ENCODE measurements at regions of chr17 and their contacts with region 1.

Region 1: DNA sequence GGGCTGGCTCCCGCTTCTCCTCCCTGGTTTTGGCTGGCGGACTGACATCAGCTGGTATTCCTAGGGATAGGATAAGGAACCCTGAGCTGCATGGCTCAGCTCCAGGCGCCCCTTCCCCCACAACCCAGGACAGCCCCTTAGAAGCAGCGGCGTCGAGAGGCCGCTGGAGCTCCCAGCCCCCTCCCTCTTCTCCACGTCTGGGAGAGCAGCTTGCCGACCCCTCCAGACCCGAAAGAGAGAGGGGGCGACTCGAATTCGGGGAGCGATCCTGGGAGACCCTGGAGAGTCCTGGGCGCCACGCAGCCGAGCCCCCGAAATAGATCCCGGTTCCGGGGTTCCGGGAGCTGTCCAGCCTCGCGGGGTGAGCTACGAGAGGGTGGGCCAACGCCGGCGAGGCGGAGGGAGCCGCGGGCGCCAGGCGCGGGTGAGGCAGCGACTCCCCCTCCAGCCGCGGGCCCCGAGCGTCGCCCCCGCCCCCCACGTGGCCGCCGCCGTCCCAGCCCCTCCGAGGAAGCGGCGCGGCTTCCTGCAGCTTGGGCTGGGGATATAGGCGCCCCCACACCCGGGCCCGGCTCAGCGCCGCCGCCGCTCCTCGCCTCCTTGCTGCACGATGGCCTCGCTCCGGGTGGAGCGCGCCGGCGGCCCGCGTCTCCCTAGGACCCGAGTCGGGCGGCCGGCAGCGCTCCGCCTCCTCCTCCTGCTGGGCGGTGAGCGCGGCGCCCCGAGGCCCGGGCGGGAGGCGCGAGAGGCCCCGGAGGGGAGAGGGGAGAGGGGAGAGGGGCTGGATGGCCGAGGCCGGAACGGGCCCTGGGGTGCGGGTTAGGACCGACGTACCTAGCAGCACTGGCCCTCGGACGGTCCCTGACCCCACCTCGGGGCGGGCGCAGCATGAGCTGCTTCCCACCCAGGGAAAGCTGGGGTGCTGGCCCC is at the start of gene RAMP2:
- DNase-seq: no peak
- ATAC-seq: peak; percentile 43
- H3K4me3 Mint-ChIP-seq: no peak within 1 kb of the TSS
- H3K27ac Mint-ChIP-seq: no peak within 1 kb of the TSS
- H3K4me1 Mint-ChIP-seq: peaks cover 4% of the 10 kb centered on the region
- H3K27me3 Mint-ChIP-seq: peaks cover 55% of the 10 kb centered on the region
- CTCF ChIP-seq: no peak
- total RNA-seq, gene RAMP2: not detected

Region 2: DNA sequence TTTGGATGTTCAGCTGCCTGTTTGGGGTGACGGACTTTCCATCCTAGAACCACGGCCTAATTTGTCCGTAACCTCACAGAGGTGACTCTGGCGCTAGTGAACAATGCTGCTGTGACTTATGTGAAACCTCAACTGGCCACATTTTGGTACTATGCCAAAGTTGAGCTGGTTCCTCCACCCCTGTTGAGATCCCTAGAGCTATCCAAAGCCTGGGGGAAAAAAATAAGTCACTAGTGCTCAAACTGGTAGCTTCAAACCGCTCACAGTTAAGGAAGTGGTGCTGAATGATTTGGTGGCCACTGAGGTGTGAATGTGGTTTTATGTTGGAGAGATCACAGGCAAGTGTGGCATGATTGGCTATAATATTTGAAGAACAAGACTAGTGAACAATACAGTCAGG is 113.1 kb before region 1 on chr17:
- CTCF ChIA-PET with region 1: no interaction called
- POLR2A ChIA-PET with region 1: no interaction called
- intact Hi-C with region 1: no loop called
- DNase-seq: no peak
- ATAC-seq: no peak
- H3K4me3 Mint-ChIP-seq: no peak overlapping the region
- H3K27ac Mint-ChIP-seq: no peak overlapping the region
- H3K4me1 Mint-ChIP-seq: no peaks in the 10 kb centered on the region
- H3K27me3 Mint-ChIP-seq: peaks cover 8% of the 10 kb centered on the region
- CTCF ChIP-seq: no peak

Region 3: DNA sequence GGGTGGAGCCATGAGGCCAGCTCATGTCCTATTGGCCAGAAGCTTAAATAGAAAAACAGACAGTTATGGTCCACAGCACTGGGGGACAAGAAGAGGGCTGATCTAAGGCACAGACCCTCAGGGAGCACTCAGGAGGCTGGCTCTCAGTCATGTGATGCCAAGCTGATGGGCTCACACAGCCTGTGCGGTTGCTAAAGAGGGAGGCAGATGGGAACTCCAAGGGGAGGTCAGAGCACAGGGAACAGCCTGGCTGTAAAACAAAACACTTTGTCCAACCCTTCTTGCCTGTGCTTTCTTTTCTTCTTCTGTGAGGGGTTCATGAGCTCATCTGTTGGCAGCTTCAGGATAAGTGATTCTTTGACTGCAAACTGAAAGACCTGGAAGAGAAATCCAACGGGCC is 51.4 kb before region 1 on chr17:
- CTCF ChIA-PET with region 1: interaction called, 10 read pairs
- POLR2A ChIA-PET with region 1: no interaction called
- intact Hi-C with region 1: no loop called
- DNase-seq: no peak
- ATAC-seq: no peak
- H3K4me3 Mint-ChIP-seq: no peak overlapping the region
- H3K27ac Mint-ChIP-seq: no peak overlapping the region
- H3K4me1 Mint-ChIP-seq: peaks cover 18% of the 10 kb centered on the region
- H3K27me3 Mint-ChIP-seq: no peaks in the 10 kb centered on the region
- CTCF ChIP-seq: no peak

Region 4: DNA sequence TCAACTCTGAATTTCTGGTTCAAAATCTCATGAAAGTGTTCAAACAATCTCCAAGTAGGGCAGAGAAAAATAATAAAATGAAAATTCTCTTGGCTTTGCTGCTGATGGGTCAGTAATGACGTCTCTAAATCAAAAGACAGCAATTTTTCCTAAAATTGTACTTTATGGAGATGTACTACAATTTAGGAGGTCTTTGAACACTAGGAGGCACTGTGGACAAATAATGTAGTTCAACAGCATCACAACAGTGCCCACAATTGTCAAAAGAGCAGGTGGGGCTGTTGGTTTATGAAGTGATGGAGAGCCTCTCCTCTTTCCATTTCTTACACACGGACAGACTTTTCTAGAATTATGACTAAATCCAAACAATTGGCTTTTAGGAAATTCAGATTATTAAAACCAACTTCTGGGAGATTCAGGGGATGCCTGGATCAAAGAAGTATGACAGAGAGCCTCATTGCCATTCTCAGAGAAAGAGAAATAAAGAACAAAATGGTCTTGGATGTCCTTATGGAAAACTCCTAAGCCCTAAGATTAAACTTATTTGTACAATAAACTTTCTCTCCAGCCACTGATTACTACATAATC is 39.8 kb before region 1 on chr17:
- CTCF ChIA-PET with region 1: interaction called, 54 read pairs
- POLR2A ChIA-PET with region 1: interaction called, 3 read pairs
- intact Hi-C with region 1: loop called (anchors 2 kb)
- DNase-seq: peak; percentile 43
- ATAC-seq: peak; percentile 75
- H3K4me3 Mint-ChIP-seq: no peak overlapping the region
- H3K27ac Mint-ChIP-seq: no peak overlapping the region
- H3K4me1 Mint-ChIP-seq: no peaks in the 10 kb centered on the region
- H3K27me3 Mint-ChIP-seq: no peaks in the 10 kb centered on the region
- CTCF ChIP-seq: peak; percentile 81

Region 5: GRCh38 chr17:42744806-42745617 is 15.9 kb before region 1 on chr17 and contains the start of gene EZH1:
- CTCF ChIA-PET with region 1: interaction called, 38 read pairs
- POLR2A ChIA-PET with region 1: interaction called, 3 read pairs
- intact Hi-C with region 1: no loop called
- DNase-seq: peak; percentile 91
- ATAC-seq: peak; percentile 91
- H3K4me3 Mint-ChIP-seq: peak within 1 kb of the TSS; percentile 98
- H3K27ac Mint-ChIP-seq: peak within 1 kb of the TSS; percentile 98
- H3K4me1 Mint-ChIP-seq: peaks cover 15% of the 10 kb centered on the region
- H3K27me3 Mint-ChIP-seq: peaks cover 4% of the 10 kb centered on the region
- CTCF ChIP-seq: no peak
- total RNA-seq, gene EZH1: 23.1 to 25.5 TPM

Region 6: GRCh38 chr17:42750739-42751344 is 10.1 kb before region 1 on chr17:
- CTCF ChIA-PET with region 1: interaction called, 38 read pairs
- POLR2A ChIA-PET with region 1: interaction called, 3 read pairs
- intact Hi-C with region 1: no loop called
- DNase-seq: no peak
- ATAC-seq: no peak
- H3K4me3 Mint-ChIP-seq: no peak overlapping the region
- H3K27ac Mint-ChIP-seq: no peak overlapping the region
- H3K4me1 Mint-ChIP-seq: no peaks in the 10 kb centered on the region
- H3K27me3 Mint-ChIP-seq: peaks cover 15% of the 10 kb centered on the region
- CTCF ChIP-seq: no peak

Region 7: DNA sequence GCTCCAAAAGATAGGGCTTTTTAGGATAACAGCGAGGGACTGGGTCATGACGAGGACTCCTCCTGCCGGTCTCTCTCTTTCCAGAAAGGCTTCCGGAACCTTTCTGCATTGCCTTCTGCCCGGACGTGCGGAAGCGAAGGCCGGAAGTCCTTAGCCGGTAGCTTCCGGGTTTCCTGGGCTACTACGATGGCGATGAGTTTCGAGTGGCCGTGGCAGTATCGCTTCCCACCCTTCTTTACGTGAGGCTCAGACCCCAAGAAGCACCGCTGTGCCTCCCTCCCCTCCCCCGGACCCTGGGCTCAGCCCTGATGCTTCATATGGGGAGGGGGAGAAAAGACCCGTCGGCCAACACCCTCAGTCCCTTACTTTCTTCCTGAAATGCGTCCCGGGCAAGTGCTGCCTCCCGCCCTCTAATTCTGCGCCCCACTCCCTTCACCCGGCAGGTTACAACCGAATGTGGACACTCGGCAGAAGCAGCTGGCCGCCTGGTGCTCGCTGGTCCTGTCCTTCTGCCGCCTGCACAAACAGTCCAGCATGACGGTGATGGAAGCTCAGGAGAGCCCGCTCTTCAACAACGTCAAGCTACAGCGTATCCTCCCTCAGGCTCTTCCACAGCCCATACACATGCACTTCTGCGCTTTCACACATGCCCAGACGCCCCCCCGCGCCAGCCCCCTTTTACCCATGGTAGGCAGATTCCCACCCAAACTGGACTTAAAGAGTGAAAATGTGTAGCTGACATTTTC is 12.5 kb after region 1 on chr17 and contains the start of gene VPS25:
- CTCF ChIA-PET with region 1: interaction called, 37 read pairs
- POLR2A ChIA-PET with region 1: no interaction called
- intact Hi-C with region 1: no loop called
- DNase-seq: peak; percentile 79
- ATAC-seq: peak; percentile 96
- H3K4me3 Mint-ChIP-seq: peak within 1 kb of the TSS; percentile 98
- H3K27ac Mint-ChIP-seq: peak within 1 kb of the TSS; percentile 95
- H3K4me1 Mint-ChIP-seq: peaks cover 21% of the 10 kb centered on the region
- H3K27me3 Mint-ChIP-seq: no peaks in the 10 kb centered on the region
- CTCF ChIP-seq: no peak
- total RNA-seq, gene VPS25: 63.4 to 67.2 TPM

Region 8: GRCh38 chr17:42814633-42815399 is 53.9 kb after region 1 on chr17:
- CTCF ChIA-PET with region 1: interaction called, 13 read pairs
- POLR2A ChIA-PET with region 1: no interaction called
- intact Hi-C with region 1: no loop called
- DNase-seq: no peak
- ATAC-seq: no peak
- H3K4me3 Mint-ChIP-seq: no peak overlapping the region
- H3K27ac Mint-ChIP-seq: no peak overlapping the region
- H3K4me1 Mint-ChIP-seq: peaks cover 4% of the 10 kb centered on the region
- H3K27me3 Mint-ChIP-seq: no peaks in the 10 kb centered on the region
- CTCF ChIP-seq: no peak

Measured in activated CD8-positive, alpha-beta T cell treated with anti-CD3 and anti-CD28 coated beads for 36 hours (primary cell).